Dendritic cell treated with granulocyte-macrophage colony-stimulating factor and Interleukin-4, amounts not matched to agents 40 ng/mL and 50 ng/mL, for 4 days (primary cell): ENCODE measurements at regions of chr3 and their contacts with region 1.

Region 1: GRCh38 chr3:47164007-47164881 is at the start of gene SETD2:
- H3K4me3 Mint-ChIP-seq: peak within 1 kb of the TSS; percentile 97
- H3K27ac Mint-ChIP-seq: peak within 1 kb of the TSS; percentile 90
- H3K4me1 Mint-ChIP-seq: peaks cover 42% of the 10 kb centered on the region
- H3K27me3 Mint-ChIP-seq: no peaks in the 10 kb centered on the region

Region 2: DNA sequence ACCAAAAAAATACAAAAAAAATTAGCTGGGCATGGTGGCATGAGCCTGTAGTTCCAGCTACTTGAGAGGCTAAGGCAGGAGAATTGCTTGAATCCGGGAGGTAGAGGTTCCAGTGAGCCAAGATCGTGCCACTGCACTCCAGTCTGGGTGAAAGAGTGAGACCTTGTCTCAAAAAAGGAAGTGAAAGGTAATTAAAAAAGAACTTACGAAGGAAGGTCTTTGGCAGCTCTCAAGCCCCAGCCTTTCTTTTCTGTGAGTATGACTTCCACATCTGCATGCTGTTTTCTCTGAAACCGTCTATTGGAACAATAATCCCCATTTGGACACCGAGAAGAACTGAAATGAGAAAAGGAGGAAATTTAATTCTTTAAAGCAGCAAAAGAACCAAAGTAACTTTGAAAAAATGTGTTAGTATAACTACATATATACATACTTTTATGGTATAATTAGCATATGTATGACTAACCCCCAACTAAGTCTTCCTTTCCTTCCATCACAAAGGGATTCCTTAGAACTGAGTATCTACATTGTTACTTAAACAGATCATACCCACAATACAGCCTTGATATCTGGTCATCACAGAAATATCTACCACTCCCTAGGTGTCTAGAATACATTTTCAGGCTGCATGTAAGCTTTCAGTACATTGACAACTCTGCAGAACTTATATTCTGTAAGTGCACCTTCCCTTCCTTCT is 50.4 kb before region 1 on chr3:
- intact Hi-C with region 1: loop called (anchors 10 kb)
- H3K4me3 Mint-ChIP-seq: no peak overlapping the region
- H3K27ac Mint-ChIP-seq: no peak overlapping the region
- H3K4me1 Mint-ChIP-seq: peaks cover 22% of the 10 kb centered on the region
- H3K27me3 Mint-ChIP-seq: no peaks in the 10 kb centered on the region

Region 3: GRCh38 chr3:47225310-47225906 is 61.2 kb after region 1 on chr3:
- intact Hi-C with region 1: loop called (anchors 5 kb)
- H3K4me3 Mint-ChIP-seq: peak overlapping the region; percentile 30
- H3K27ac Mint-ChIP-seq: peak overlapping the region; percentile 33
- H3K4me1 Mint-ChIP-seq: peaks cover 49% of the 10 kb centered on the region
- H3K27me3 Mint-ChIP-seq: no peaks in the 10 kb centered on the region

Region 4: GRCh38 chr3:47315069-47315647 is 150.9 kb after region 1 on chr3:
- intact Hi-C with region 1: loop called (anchors 10 kb)
- H3K4me3 Mint-ChIP-seq: peak overlapping the region; percentile 37
- H3K27ac Mint-ChIP-seq: peak overlapping the region; percentile 75
- H3K4me1 Mint-ChIP-seq: peaks cover 73% of the 10 kb centered on the region
- H3K27me3 Mint-ChIP-seq: no peaks in the 10 kb centered on the region

Region 5: GRCh38 chr3:47513125-47513929 is 349.1 kb after region 1 on chr3 and contains the start of gene ELP6:
- intact Hi-C with region 1: no loop called
- H3K4me3 Mint-ChIP-seq: peak within 1 kb of the TSS; percentile 93
- H3K27ac Mint-ChIP-seq: peak within 1 kb of the TSS; percentile 96
- H3K4me1 Mint-ChIP-seq: peaks cover 24% of the 10 kb centered on the region
- H3K27me3 Mint-ChIP-seq: no peaks in the 10 kb centered on the region